Activated CD4-positive, alpha-beta memory T cell treated with anti-CD3 and anti-CD28 coated beads for 36 hours (primary cell): ENCODE measurements at regions of chr2 and their contacts with region 1.

Region 1: GRCh38 chr2:126971481-126972278 is 73.0 kb downstream of the TEX51 start:
- DNase-seq: peak; percentile 75
- H3K4me3 Mint-ChIP-seq: peak overlapping the region; percentile 46
- H3K27ac Mint-ChIP-seq: no peak overlapping the region
- H3K4me1 Mint-ChIP-seq: no peaks in the 10 kb centered on the region
- H3K27me3 Mint-ChIP-seq: peaks cover 37% of the 10 kb centered on the region

Region 2: GRCh38 chr2:126244937-126245336 is 726.7 kb before region 1 on chr2:
- CTCF ChIA-PET with region 1: interaction called, 6 read pairs
- POLR2A ChIA-PET with region 1: no interaction called
- intact Hi-C with region 1: loop called (anchors 10 kb)
- DNase-seq: peak; percentile 61
- H3K4me3 Mint-ChIP-seq: no peak overlapping the region
- H3K27ac Mint-ChIP-seq: no peak overlapping the region
- H3K4me1 Mint-ChIP-seq: no peaks in the 10 kb centered on the region
- H3K27me3 Mint-ChIP-seq: no peaks in the 10 kb centered on the region

Region 3: DNA sequence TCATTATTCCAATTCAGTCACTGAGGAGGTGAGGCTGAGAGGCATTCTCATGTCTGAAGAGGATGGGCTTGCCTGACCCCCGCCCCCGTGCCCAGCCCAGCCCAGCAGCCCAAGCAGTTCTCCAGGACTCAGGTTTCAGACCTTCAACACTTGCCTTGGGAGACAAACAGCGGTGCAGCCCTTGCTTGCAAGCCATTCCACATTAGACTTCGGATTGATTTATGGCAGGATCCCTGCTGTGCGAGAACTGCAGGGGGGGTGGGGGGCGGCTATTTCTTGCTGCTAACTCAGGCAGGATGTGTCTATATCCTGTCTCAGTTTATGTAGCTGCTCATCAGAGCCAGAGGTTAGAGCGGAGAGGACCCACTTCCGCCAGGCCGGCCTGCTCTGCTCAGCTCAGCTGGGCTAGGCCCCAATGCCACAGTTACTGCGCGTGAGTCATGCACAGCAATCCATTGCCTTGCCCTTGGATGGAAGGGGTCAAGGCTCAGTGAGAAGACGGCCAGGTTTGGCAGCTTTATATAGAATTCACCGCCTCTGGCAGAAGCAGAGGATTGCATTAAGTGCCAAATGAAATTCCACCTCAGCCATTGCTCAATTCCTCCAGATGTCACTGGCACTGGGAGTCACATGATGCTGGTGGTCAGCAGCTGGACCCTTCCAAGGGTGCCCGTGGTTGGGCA is 313.9 kb before region 1 on chr2:
- CTCF ChIA-PET with region 1: no interaction called
- POLR2A ChIA-PET with region 1: no interaction called
- intact Hi-C with region 1: no loop called
- DNase-seq: peak; percentile 89
- H3K4me3 Mint-ChIP-seq: peak overlapping the region; percentile 91
- H3K27ac Mint-ChIP-seq: peak overlapping the region; percentile 97
- H3K4me1 Mint-ChIP-seq: peaks cover 52% of the 10 kb centered on the region
- H3K27me3 Mint-ChIP-seq: no peaks in the 10 kb centered on the region

Region 4: DNA sequence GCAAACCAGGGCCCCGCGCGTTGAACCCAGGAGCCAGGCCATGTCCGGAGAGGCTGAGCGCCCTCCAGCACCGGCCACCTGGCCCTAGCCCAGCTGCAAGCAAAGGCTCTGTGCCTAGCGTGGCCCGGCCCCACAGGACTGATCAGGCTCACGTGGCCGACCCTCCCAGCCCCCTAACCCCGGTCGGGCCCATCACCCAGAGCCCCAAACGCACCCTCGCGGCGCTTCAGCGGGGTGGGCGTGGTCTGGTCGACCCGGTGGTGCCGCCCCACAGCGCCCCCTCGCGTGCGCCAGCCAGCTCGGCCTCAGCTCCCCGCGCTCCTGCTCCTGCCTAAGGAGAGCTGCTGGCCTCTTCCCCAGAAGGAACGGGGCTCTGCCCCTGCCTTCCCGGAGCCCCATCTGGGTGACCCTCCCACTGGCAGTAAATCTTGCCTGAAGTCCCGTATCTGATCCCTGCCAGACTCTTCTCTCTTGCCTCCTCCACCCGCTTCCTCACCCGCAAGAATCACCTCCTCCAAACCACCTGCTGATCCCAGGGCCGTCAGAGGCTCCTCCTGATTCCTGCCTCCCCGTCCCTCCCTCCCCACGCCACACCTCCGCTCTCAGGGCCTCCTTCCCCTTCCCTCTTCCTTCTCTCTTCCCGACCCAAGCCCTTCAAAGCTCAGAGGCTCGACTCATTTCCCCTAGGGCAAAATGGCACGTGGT is 85.3 kb before region 1 on chr2:
- CTCF ChIA-PET with region 1: interaction called, 10 read pairs
- POLR2A ChIA-PET with region 1: no interaction called
- intact Hi-C with region 1: no loop called
- DNase-seq: peak; percentile 69
- H3K4me3 Mint-ChIP-seq: no peak overlapping the region
- H3K27ac Mint-ChIP-seq: no peak overlapping the region
- H3K4me1 Mint-ChIP-seq: peaks cover 2% of the 10 kb centered on the region
- H3K27me3 Mint-ChIP-seq: peaks cover 14% of the 10 kb centered on the region